GM12878 (cell line): ENCODE measurements at regions of chr7 and their contacts with region 1.

Region 1: DNA sequence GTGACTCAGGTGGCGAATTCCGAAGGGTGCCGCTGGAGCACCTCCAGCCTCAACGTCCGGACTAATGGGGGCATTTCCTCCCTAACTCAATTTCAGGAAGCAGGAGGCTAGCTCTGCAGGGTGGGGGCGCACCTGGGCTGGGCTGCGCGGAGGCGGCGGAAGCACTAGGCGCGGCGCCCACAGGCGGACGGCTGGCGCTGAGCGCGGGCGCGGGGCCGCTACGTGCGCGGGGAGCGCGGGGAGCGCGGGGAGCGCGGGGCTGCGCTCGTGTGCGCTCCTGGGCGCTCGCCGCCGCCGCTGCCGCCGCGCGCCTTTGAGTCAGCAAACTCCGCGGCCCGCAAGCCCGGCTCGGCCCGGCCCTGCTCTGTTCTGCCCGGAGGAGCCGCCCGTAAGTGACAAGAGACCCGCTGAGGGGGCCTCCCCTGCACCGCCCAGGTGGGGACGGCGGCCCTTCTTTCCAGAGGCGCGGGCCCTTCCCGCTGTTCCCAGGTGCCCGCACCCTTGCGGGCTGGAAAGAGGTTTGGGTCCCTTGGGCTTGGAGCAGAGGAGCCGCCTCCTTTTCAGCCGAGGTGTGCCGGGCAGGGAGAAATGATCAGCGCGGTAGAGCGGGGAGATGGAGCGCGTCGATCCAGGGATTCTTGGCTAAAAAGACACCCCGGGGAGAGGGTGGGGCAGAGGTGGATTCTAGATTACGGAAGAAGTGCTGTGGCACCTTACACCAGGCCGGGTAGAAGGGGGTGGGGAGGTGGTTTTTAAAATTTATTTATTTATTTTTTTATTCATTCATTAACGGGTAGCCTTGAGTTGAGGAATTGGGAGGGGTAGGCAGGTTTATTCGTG is at the start of gene SNX10:
- DNase-seq: no peak
- ATAC-seq: peak; percentile 80
- H3K4me3 ChIP-seq: peak within 1 kb of the TSS; percentile 98
- H3K27ac ChIP-seq: peak within 1 kb of the TSS; percentile 87
- H3K4me1 ChIP-seq: peaks cover 16% of the 10 kb centered on the region
- H3K27me3 ChIP-seq: no peaks in the 10 kb centered on the region
- CTCF ChIP-seq: peak; percentile 54 to 84 (median 54); a peak in 5 of 6 replicates
- EP300 ChIP-seq: no peak
- POLR2A ChIP-seq: peak; percentile 66; the same call in 1 of the 2 replicates
- RAD21 ChIP-seq: peak; percentile 67
- polyA plus RNA-seq, gene SNX10: 22.9 to 29.7 TPM

Region 2: GRCh38 chr7:25968205-25968993 is 323.5 kb before region 1 on chr7:
- CTCF ChIA-PET with region 1: interaction called, 3 read pairs
- POLR2A ChIA-PET with region 1: no interaction called
- RAD21 ChIA-PET with region 1: interaction called, 4 read pairs
- SMC1A ChIA-PET with region 1: interaction called, 4 read pairs
- in situ Hi-C with region 1: no loop called
- intact Hi-C with region 1: loop called (anchors 5 kb)
- DNase-seq: peak; percentile 98
- ATAC-seq: peak; percentile 75
- H3K4me3 ChIP-seq: peak overlapping the region; percentile 31; the same call in 1 of the 2 replicates
- H3K27ac ChIP-seq: peak overlapping the region; percentile 91
- H3K4me1 ChIP-seq: peaks cover 54% of the 10 kb centered on the region
- H3K27me3 ChIP-seq: no peaks in the 10 kb centered on the region
- CTCF ChIP-seq: peak; percentile 5 to 23 (median 10); a peak in 1 of 6 replicates
- EP300 ChIP-seq: peak; percentile 94 to 95
- POLR2A ChIP-seq: peak; percentile 54; the same call in 1 of the 2 replicates
- RAD21 ChIP-seq: 0 out of 2 replicates have a peak, but pooled peaks have one; percentile 19

Region 3: GRCh38 chr7:26278770-26279169 is 13.1 kb before region 1 on chr7:
- CTCF ChIA-PET with region 1: interaction called, 3 read pairs
- POLR2A ChIA-PET with region 1: interaction called, 5 read pairs
- RAD21 ChIA-PET with region 1: no interaction called
- SMC1A ChIA-PET with region 1: interaction called, 17 read pairs
- in situ Hi-C with region 1: no loop called
- intact Hi-C with region 1: no loop called
- DNase-seq: no peak
- ATAC-seq: peak; percentile 84
- H3K4me3 ChIP-seq: no peak overlapping the region
- H3K27ac ChIP-seq: no peak overlapping the region
- H3K4me1 ChIP-seq: no peaks in the 10 kb centered on the region
- H3K27me3 ChIP-seq: no peaks in the 10 kb centered on the region
- CTCF ChIP-seq: peak; percentile 20 to 57 (median 42); a peak in 4 of 6 replicates
- EP300 ChIP-seq: no peak
- POLR2A ChIP-seq: no peak
- RAD21 ChIP-seq: peak; percentile 24; the same call in 1 of the 2 replicates

Region 4: DNA sequence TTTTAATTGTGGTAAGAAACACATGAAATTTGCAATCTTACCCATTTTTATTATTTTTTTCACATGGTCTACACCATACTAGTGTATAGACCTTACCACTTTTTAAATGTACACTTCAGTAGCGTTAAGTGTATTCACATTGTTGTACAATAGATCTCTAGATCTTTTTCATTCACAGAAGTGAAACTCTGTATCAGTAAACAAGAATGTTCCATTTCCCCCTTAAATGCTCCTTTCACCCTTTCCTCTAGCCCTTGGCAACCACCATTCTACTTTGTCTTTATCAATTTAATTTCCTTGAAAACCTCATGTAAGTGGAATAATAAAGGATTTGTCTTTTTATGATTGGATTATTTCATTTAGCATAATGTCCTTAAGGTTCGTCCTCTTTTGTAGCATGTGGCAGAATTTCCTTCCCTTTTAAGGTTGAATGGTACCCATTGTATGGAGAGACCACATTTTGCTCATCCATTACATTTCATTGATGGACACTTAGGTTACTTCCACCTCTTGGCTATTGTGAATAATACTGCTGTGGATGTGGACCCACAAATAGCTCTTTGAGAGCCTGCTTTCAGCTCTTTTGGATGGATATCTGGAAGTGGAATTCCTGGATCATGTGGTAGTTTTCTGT is 45.4 kb after region 1 on chr7:
- CTCF ChIA-PET with region 1: interaction called, 11 read pairs
- POLR2A ChIA-PET with region 1: interaction called, 10 read pairs
- RAD21 ChIA-PET with region 1: interaction called, 17 read pairs
- SMC1A ChIA-PET with region 1: interaction called, 25 read pairs
- in situ Hi-C with region 1: no loop called
- intact Hi-C with region 1: no loop called
- DNase-seq: no peak
- ATAC-seq: peak; percentile 76
- H3K4me3 ChIP-seq: peak overlapping the region; percentile 23; the same call in 1 of the 2 replicates
- H3K27ac ChIP-seq: no peak overlapping the region
- H3K4me1 ChIP-seq: peaks cover 35% of the 10 kb centered on the region
- H3K27me3 ChIP-seq: no peaks in the 10 kb centered on the region
- CTCF ChIP-seq: no peak
- EP300 ChIP-seq: no peak
- POLR2A ChIP-seq: no peak
- RAD21 ChIP-seq: no peak

Region 5: GRCh38 chr7:26356929-26357798 is 65.2 kb after region 1 on chr7:
- CTCF ChIA-PET with region 1: interaction called, 5 read pairs
- POLR2A ChIA-PET with region 1: interaction called, 4 read pairs
- RAD21 ChIA-PET with region 1: interaction called, 10 read pairs
- SMC1A ChIA-PET with region 1: interaction called, 55 read pairs
- in situ Hi-C with region 1: no loop called
- intact Hi-C with region 1: no loop called
- DNase-seq: no peak
- ATAC-seq: no peak
- H3K4me3 ChIP-seq: no peak overlapping the region
- H3K27ac ChIP-seq: no peak overlapping the region
- H3K4me1 ChIP-seq: peaks cover 3% of the 10 kb centered on the region; the same call in 1 of the 2 replicates
- H3K27me3 ChIP-seq: no peaks in the 10 kb centered on the region
- CTCF ChIP-seq: no peak
- EP300 ChIP-seq: no peak
- POLR2A ChIP-seq: no peak
- RAD21 ChIP-seq: no peak